Astrocyte of the cerebellum (primary cell): ENCODE measurements at regions of chr10 and their contacts with region 1.

Region 1: GRCh38 chr10:126468876-126469643 is 80.8 kb upstream of the ADAM12 start:
- DNase-seq: peak; percentile 87
- H3K4me3 ChIP-seq: no peak overlapping the region
- CTCF ChIP-seq: no peak

Region 2: GRCh38 chr10:126504063-126504739 is 35.1 kb after region 1 on chr10:
- in situ Hi-C with region 1: loop called (anchors 5 kb)
- DNase-seq: peak; percentile 37
- H3K4me3 ChIP-seq: no peak overlapping the region
- CTCF ChIP-seq: peak; percentile 80